HepG2 (cell line): ENCODE measurements at regions of chr2 and their contacts with region 1.

Region 1: GRCh38 chr2:202911512-202912341 is at the starts of genes CARF and WDR12:
- DNase-seq: peak; percentile 94
- ATAC-seq: peak; percentile 92
- H3K4me3 ChIP-seq: peak within 1 kb of the TSS; percentile 88 to 96 (median 91)
- H3K27ac ChIP-seq: peak within 1 kb of the TSS; percentile 95
- H3K4me1 ChIP-seq: peaks cover 26% of the 10 kb centered on the region
- H3K27me3 ChIP-seq: peaks cover 0 to 4% of the 10 kb centered on the region in 2 experiments; a peak in 2 of 5 replicates
- CTCF ChIP-seq: no peak
- EP300 ChIP-seq: no peak
- POLR2A ChIP-seq: peak; percentile 99
- RAD21 ChIP-seq: no peak; the same call in 1 of the 2 replicates
- total RNA-seq, gene CARF: 3.0 and 3.7 TPM in 2 replicates
- total RNA-seq, gene WDR12: 216 and 330 TPM in 2 replicates

Region 2: GRCh38 chr2:202687276-202687675 is 224.5 kb before region 1 on chr2:
- CTCF ChIA-PET with region 1: no interaction called
- POLR2A ChIA-PET with region 1: no interaction called
- in situ Hi-C with region 1: no loop called
- intact Hi-C with region 1: no loop called
- DNase-seq: peak; percentile 71
- ATAC-seq: peak; percentile 90
- H3K4me3 ChIP-seq: no peak overlapping the region; a peak in 1 of 6 replicates
- H3K27ac ChIP-seq: no peak overlapping the region
- H3K4me1 ChIP-seq: peaks cover 16% of the 10 kb centered on the region
- H3K27me3 ChIP-seq: no peaks in the 10 kb centered on the region
- CTCF ChIP-seq: no peak
- EP300 ChIP-seq: peak in 1 of 2 experiments; percentile 31; a peak in 1 of 4 replicates
- POLR2A ChIP-seq: no peak
- RAD21 ChIP-seq: no peak

Region 3: GRCh38 chr2:202808754-202809153 is 103.0 kb before region 1 on chr2:
- CTCF ChIA-PET with region 1: no interaction called
- POLR2A ChIA-PET with region 1: no interaction called
- in situ Hi-C with region 1: no loop called
- intact Hi-C with region 1: no loop called
- DNase-seq: no peak
- ATAC-seq: no peak
- H3K4me3 ChIP-seq: no peak overlapping the region
- H3K27ac ChIP-seq: no peak overlapping the region
- H3K4me1 ChIP-seq: no peaks in the 10 kb centered on the region
- H3K27me3 ChIP-seq: no peaks in the 10 kb centered on the region
- CTCF ChIP-seq: no peak
- EP300 ChIP-seq: no peak
- POLR2A ChIP-seq: no peak
- RAD21 ChIP-seq: no peak

Region 4: DNA sequence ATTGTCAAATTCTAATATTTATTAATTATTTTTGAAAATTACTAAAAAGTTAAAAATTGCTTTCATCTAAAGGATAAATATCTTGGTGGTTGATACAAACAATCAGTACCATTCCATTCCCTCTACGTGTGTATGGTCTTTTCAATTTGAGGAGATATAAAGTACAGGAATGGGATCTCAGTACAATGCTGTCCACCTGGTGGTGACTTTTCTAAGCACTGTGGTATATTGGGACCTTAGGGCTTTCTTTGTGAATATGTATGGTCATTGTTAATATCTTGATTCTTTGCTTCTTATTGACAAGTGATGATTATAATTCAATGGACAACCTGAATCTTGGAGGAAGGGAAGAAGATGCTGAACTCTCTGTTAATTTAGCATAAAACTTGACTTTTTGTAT is 186.0 kb after region 1 on chr2:
- CTCF ChIA-PET with region 1: no interaction called
- POLR2A ChIA-PET with region 1: no interaction called
- in situ Hi-C with region 1: no loop called
- intact Hi-C with region 1: loop called (anchors 2 kb)
- DNase-seq: peak; percentile 36
- ATAC-seq: peak; percentile 90
- H3K4me3 ChIP-seq: no peak overlapping the region
- H3K27ac ChIP-seq: no peak overlapping the region
- H3K4me1 ChIP-seq: no peaks in the 10 kb centered on the region
- H3K27me3 ChIP-seq: no peaks in the 10 kb centered on the region
- CTCF ChIP-seq: peak; percentile 48
- EP300 ChIP-seq: no peak
- POLR2A ChIP-seq: no peak
- RAD21 ChIP-seq: no peak

Region 5: DNA sequence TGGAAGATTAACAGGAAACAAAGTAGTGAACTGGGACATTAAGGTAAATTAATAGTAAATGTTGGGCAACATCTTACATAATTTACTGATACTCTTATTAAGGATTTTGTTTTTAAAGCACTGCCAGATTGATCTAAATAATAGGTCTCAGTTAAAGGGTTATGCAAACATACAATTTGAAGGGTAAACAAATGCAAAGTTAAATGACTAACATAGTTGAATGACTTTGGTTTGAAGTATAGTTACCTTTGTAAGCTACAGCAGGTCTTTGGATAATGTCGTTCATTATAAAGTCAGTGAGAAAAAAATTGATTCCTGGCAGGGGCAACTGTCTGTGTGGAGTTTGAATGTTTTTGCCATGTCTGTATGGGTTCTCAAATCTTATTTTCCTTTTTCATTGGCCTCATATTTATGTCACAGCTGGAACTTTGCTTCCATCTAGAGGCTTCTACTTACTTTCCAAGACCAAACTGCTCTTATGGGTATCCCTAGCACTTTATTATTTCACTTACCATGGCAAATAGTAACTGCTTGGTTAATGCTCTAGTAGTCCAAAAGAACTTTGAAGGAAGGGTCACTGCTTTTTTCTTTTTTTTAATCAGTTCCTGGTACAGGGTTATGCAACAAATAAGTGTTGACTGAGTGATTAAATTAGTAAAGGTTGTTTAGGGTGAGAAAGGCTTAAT is 210.7 kb after region 1 on chr2:
- CTCF ChIA-PET with region 1: no interaction called
- POLR2A ChIA-PET with region 1: no interaction called
- in situ Hi-C with region 1: no loop called
- intact Hi-C with region 1: loop called (anchors 10 kb)
- DNase-seq: peak; percentile 34
- ATAC-seq: peak; percentile 64
- H3K4me3 ChIP-seq: no peak overlapping the region
- H3K27ac ChIP-seq: no peak overlapping the region
- H3K4me1 ChIP-seq: peaks cover 9% of the 10 kb centered on the region
- H3K27me3 ChIP-seq: no peaks in the 10 kb centered on the region
- CTCF ChIP-seq: peak; percentile 63
- EP300 ChIP-seq: no peak
- POLR2A ChIP-seq: no peak
- RAD21 ChIP-seq: 0 out of 2 replicates have a peak, but pooled peaks have one; percentile 25

Region 6: GRCh38 chr2:203551778-203552177 is 640.1 kb after region 1 on chr2:
- CTCF ChIA-PET with region 1: no interaction called
- POLR2A ChIA-PET with region 1: no interaction called
- in situ Hi-C with region 1: no loop called
- intact Hi-C with region 1: no loop called
- DNase-seq: peak; percentile 30
- ATAC-seq: peak; percentile 66; the same call in 2 of the 3 replicates
- H3K4me3 ChIP-seq: no peak overlapping the region
- H3K27ac ChIP-seq: no peak overlapping the region
- H3K4me1 ChIP-seq: peaks cover 7% of the 10 kb centered on the region; the same call in 1 of the 2 replicates
- H3K27me3 ChIP-seq: no peaks in the 10 kb centered on the region
- CTCF ChIP-seq: no peak
- EP300 ChIP-seq: peak; percentile 11 to 16; a peak in 1 of 4 replicates
- POLR2A ChIP-seq: no peak
- RAD21 ChIP-seq: no peak